ENCODE measurements at regions of chr18 and their contacts with region 1.

Region 1: DNA sequence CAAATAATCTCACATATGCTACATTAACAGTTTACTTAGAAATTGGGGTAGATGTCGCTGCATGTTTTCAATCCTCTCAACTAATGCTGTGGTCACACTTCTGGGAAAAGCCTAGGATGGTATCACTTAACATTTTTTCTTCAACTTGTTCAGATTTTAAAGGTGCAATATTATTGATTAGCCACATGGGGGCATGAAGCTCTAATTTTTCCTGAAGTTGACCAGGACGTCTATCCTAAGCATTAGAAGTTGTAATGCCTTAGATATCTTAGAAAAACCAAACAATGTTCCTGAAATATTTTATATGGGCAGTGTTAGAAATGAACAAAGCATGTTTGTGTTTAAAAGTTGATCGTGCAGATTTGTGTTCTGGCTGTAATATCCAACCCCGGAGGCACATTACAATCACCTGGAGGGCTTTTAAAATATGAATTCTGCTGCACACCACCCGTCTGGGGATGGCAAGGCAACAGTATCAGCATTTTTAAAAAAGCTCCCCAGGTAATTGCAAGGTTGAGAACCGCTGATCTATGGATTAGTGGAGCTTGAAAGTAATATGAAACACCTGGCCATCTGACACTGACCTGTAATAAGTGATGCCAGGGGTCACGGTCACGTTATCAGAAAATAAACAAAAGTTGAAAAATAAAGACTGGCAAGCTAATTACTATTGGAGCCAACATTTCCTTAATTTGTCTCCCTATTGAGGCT is 100.5 kb upstream of the LMAN1 start:
- H3K4me3 ChIP-seq: no peak overlapping the region
- H3K27ac ChIP-seq: peak overlapping the region; percentile 43; the same call in 1 of the 2 replicates
- H3K4me1 ChIP-seq: peaks cover 22% of the 10 kb centered on the region
- CTCF ChIP-seq: peak; percentile 41; the same call in 1 of the 2 replicates

Region 2: GRCh38 chr18:59484837-59485328 is 25.4 kb after region 1 on chr18:
- CTCF ChIA-PET with region 1: interaction called, 21 read pairs
- POLR2A ChIA-PET with region 1: interaction called, 7 read pairs
- H3K4me3 ChIP-seq: no peak overlapping the region
- H3K27ac ChIP-seq: peak overlapping the region; percentile 41; the same call in 1 of the 2 replicates
- H3K4me1 ChIP-seq: peaks cover 18% of the 10 kb centered on the region
- CTCF ChIP-seq: no peak

Region 3: DNA sequence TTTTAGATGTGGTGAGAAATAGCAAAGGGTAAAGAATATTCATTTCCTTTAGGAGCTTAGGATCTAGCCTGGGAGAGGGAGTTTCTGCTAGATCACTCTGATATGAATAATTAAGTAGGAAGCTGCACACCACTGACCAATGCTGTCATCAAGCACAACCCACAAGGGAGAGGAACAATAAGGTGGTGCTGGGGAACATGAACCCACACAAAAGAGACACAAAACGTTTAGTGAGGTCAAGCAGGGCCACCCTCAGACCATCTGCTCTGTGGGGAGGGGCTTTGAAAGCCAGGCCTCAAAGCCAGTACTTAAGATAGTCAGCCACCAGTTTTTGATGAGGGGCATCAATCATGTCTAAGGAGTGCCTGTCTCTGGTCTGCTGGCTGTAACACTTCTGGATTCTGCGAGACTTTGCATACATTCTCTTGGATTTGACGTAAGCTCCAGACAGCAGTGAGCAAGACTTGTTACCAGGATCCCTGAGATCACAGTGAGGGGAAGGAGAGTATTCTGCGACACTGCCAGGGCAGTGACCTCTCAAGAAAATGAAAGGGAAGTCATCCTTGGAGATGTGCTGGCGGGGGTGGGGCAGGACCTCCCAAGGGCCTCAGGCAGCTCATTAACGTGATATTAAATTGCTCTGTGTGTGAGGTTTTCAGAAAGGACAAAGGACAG is 110.7 kb after region 1 on chr18:
- CTCF ChIA-PET with region 1: interaction called, 10 read pairs
- POLR2A ChIA-PET with region 1: no interaction called
- H3K4me3 ChIP-seq: no peak overlapping the region
- H3K27ac ChIP-seq: no peak overlapping the region
- H3K4me1 ChIP-seq: no peaks in the 10 kb centered on the region; the same call in 1 of the 2 replicates
- CTCF ChIP-seq: no peak

Region 4: DNA sequence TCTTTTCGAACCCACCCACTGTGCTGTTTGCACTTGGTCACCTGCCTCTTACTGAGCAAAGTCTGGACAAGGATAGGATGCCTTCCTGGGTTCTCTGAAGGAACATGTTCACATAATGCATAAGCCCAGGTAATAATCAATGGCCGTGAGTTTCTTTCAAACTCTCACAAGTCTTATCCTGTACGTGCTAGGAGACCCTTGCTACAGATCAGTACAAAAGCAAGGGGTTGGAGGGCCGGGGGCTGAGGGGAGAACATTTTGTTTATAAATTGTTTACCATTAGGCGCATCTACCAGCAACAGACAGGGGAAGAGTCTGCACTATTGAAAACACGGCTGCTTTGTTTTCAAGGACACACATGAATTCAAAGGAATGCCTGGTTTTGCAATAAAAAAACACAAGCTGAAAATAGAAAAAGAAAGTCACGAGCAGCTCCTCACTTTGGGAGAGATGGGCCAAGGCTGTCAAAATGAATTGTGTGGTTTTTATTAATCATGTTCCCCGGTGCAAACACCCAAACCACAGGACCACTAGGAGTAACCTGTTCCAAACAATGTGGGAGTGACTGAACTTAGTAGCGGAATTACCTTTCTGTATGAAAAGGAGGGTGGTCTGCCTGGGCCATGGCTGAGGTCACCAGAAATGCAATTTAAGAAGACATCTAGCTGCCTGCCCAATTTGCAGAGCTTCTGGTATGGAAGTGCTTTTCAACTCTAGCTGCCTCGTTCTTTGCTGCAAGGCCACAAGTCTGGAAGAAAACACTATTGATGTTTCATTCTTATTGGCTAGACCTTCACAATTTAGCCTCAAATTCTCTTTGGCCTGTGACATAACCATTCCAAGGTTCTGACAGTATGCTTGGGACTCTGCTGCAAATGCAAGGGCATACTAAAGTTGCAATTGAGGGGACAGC is 164.2 kb after region 1 on chr18:
- CTCF ChIA-PET with region 1: interaction called, 22 read pairs
- POLR2A ChIA-PET with region 1: no interaction called
- H3K4me3 ChIP-seq: no peak overlapping the region
- H3K27ac ChIP-seq: no peak overlapping the region
- H3K4me1 ChIP-seq: no peaks in the 10 kb centered on the region; the same call in 1 of the 2 replicates
- CTCF ChIP-seq: no peak

Region 5: DNA sequence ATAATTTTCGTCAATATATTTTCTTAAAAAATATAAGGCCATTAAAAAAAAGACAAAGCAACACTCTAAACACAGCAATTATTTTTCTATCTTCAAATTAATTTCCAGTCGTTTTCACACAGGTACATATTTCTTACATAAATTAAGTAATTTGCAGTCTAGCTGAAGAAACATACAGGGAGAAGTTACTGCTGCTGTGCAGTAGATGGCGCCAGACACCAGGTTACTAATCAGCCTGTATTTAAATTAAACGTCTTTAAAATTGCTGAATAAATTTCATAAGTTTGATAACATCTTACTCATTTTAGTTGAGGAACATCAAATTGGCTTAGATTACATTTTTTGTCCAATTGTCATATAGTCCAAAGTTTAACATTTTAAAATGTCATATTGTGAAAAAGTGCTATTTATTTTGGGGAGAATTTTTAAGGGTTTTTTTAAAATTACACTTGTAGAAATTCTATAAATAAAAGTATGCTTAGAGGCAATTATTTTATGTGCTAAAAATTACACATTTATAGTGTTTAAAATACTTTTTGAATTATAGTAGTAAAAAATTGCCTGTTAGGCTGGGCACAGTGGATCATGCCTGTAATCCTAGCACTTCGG is 528.7 kb after region 1 on chr18:
- CTCF ChIA-PET with region 1: interaction called, 10 read pairs
- POLR2A ChIA-PET with region 1: no interaction called
- H3K4me3 ChIP-seq: no peak overlapping the region
- H3K27ac ChIP-seq: no peak overlapping the region
- H3K4me1 ChIP-seq: peaks cover 10% of the 10 kb centered on the region
- CTCF ChIP-seq: peak; percentile 67